Astrocyte of the cerebellum (primary cell): ENCODE measurements at regions of chr12 and their contacts with region 1.

Region 1: DNA sequence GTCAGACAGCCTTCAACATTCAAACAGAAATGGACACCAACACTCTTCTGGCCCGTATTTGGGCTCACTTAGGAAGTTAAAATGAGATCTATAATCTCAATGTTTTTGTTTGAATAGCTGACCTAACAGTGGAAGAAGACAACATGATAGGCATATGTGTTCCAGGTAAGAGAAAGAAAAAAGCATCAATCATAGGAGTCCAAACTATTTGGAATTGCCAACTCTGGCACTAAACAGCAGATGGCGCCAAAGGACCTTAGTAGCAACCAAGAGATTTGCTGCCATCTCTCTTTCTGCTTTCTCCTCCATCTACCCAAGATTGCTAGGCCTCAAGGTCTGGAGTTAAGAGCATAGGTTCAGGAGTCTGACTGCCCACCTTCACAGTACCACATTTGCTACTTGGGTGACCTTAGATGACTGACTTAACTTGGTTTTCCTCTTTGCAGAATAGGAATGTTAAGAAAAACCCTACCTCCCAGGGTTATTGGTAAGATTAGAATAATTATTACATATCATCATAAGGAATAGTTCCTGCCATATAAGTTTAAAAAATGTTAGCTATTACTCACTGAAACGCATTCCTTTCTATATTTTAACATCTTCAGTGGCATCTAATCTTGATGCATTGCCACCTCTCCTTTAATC is 30.2 kb downstream of the PEX5 start:
- DNase-seq: peak; percentile 71
- H3K4me3 ChIP-seq: no peak overlapping the region
- CTCF ChIP-seq: peak; percentile 88

Region 2: GRCh38 chr12:7638760-7639555 is 419.2 kb after region 1 on chr12:
- in situ Hi-C with region 1: loop called (anchors 25 kb)
- DNase-seq: peak; percentile 76
- H3K4me3 ChIP-seq: no peak overlapping the region
- CTCF ChIP-seq: peak; percentile 68